CD4-positive, alpha-beta T cell (primary cell): ENCODE measurements at regions of chr1 and their contacts with region 1.

Region 1: DNA sequence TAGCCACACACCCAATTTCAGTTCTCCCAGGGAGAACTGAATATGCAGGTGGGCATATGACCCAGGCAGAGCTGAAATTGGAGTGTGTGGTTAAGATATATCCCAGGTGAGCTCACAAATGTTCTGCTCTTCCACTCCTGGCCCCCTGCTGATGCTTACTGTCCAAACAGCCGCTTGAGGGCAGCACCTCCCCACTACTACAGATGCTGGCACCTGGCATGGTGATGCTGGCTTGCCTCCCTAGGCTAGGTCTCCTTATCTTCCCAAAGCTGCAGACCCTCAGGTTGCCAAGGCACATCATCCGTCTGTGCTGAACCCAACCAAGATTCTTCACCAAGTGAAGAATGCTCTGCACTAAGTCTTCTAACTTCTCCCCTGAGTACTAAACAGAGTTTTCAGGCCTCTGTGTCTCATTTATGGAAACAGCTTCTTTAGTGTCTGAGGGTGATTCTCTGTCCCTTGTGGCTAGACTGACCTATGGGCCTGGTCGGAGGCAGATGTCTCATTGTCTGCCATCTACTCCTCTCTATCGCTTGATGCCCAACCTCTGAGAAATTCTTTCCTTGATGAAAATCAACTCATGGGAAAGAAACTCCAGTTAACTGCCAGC is 27.2 kb downstream of the XCL1 start:
- DNase-seq: peak; percentile 48 to 81 (median 59)
- ATAC-seq: peak; percentile 82
- H3K4me3 ChIP-seq: no peak overlapping the region
- H3K4me3 Mint-ChIP-seq: no peak overlapping the region
- H3K27ac ChIP-seq: no peak overlapping the region
- H3K27ac Mint-ChIP-seq: no peak overlapping the region
- H3K4me1 ChIP-seq: no peaks in the 10 kb centered on the region
- H3K4me1 Mint-ChIP-seq: no peaks in the 10 kb centered on the region
- H3K27me3 ChIP-seq: no peaks in the 10 kb centered on the region
- H3K27me3 Mint-ChIP-seq: peaks cover 4% of the 10 kb centered on the region
- CTCF ChIP-seq: peak; percentile 68

Region 2: DNA sequence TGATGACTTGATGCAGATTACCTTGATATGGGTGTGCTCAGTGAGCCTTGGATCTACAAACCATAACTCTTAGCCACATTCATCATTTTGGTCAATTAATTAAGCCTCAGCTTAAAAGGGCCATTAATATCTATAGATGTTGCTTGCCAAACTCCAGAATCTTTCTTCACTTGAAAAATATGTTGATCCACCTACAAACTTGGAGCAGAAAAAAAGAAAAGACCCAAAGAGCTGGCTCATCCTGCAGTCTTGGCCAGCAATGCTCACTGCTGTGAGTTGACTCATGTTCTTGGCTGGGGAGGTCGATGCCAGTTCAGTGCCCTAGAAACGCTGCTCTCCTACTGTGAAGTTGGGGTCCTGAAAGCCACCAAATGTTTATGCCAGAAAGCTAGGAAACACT is 50.0 kb after region 1 on chr1:
- CTCF ChIA-PET with region 1: no interaction called
- POLR2A ChIA-PET with region 1: no interaction called
- intact Hi-C with region 1: loop called in 1 of 2 experiments (anchors 10 kb)
- DNase-seq: no peak
- ATAC-seq: no peak
- H3K4me3 ChIP-seq: no peak overlapping the region
- H3K4me3 Mint-ChIP-seq: no peak overlapping the region
- H3K27ac ChIP-seq: no peak overlapping the region
- H3K27ac Mint-ChIP-seq: no peak overlapping the region
- H3K4me1 ChIP-seq: no peaks in the 10 kb centered on the region
- H3K4me1 Mint-ChIP-seq: no peaks in the 10 kb centered on the region
- H3K27me3 ChIP-seq: no peaks in the 10 kb centered on the region
- H3K27me3 Mint-ChIP-seq: peaks cover 8% of the 10 kb centered on the region
- CTCF ChIP-seq: no peak

Region 3: GRCh38 chr1:169348383-169349036 is 744.9 kb after region 1 on chr1:
- CTCF ChIA-PET with region 1: interaction called, 18 read pairs
- POLR2A ChIA-PET with region 1: no interaction called
- intact Hi-C with region 1: loop called (anchors 1 to 2 kb)
- DNase-seq: peak in 4 of 14 experiments; percentile 38 to 79 (median 68)
- ATAC-seq: peak; percentile 46
- H3K4me3 ChIP-seq: no peak overlapping the region
- H3K4me3 Mint-ChIP-seq: no peak overlapping the region
- H3K27ac ChIP-seq: no peak overlapping the region
- H3K27ac Mint-ChIP-seq: no peak overlapping the region
- H3K4me1 ChIP-seq: no peaks in the 10 kb centered on the region
- H3K4me1 Mint-ChIP-seq: no peaks in the 10 kb centered on the region
- H3K27me3 ChIP-seq: no peaks in the 10 kb centered on the region
- H3K27me3 Mint-ChIP-seq: no peaks in the 10 kb centered on the region
- CTCF ChIP-seq: peak; percentile 92